ENCODE measurements at regions of chr4 and their contacts with region 1.

Region 1: DNA sequence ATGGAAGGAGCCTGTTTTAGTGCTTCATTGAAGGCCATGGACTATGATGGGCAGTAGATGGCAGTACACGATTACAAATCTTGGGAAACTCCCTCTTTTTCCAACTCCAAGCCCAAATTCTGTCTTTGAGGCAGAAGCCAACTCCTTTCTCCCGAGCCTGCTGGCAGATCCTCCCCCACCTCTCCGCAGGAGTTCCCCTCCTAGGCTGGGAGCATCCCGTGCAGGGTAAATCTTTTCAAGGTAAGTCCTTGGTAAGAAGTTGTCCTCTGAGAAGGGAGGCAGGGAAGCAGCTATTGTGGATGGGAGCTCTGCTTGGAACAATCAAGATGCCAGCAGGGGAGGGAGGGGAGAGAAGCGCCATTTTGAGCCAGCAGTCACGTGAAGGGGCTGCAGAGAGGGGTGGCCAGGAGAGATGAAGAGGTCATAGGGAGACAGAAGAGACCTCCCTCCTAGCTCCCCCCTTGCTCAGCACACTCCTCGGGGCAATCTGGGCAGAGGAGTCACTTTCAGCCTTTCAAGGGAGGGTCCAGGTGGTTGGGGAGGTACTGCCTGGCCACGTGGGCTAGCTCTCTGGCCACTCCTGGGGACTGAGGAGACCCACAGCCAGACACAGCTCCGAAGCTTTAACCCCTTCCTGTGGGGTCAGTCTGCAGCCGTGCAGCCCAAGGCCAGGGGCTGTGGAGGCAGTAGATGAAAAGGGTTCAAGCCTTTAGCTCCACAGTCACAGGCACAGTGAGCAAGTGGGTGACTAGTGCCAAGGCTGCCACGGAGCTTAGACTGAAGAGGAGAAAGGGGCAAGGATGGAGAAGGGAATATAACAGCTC is 9.6 kb downstream of the CC2D2A start:
- DNase-seq: no peak
- ATAC-seq: peak; percentile 82

Region 2: GRCh38 chr4:15457406-15458201 is 21.7 kb before region 1 on chr4:
- intact Hi-C with region 1: no loop called
- DNase-seq: no peak
- ATAC-seq: peak; percentile 67

Region 3: DNA sequence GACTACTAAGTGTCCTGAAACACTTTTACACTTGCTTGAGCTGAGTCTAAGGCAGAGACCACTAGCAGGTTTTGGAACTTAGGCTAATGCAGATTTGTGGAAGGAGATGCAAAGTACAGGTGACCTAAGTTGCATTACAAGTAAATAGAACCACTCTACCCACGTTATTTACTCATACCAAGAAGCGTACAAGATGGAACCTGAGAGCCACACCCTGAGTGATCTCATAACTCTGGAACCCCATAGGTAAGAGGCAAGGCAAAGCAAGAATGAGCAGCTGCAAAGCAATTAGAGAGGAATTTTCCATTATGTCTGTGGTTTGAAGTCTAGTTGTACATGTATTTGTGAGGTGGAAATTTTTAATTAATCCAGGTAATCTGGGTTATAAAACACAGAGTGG is 45.8 kb after region 1 on chr4:
- intact Hi-C with region 1: no loop called
- DNase-seq: no peak
- ATAC-seq: no peak

Region 4: GRCh38 chr4:15649914-15650545 is 170.7 kb after region 1 on chr4:
- intact Hi-C with region 1: loop called (anchors 2 kb)
- DNase-seq: no peak
- ATAC-seq: peak; percentile 59

Measured in Right ventricle myocardium inferior (tissue), 1 donor.